Caco-2 (cell line): ENCODE measurements at regions of chr10 and their contacts with region 1.

Region 1: GRCh38 chr10:27241652-27242472 is 1.3 kb upstream of the ACBD5 start:
- DNase-seq: peak; percentile 95 to 97
- H3K4me3 ChIP-seq: peak overlapping the region; percentile 86
- H3K4me3 Mint-ChIP-seq: peak overlapping the region; percentile 84
- H3K27ac Mint-ChIP-seq: peak overlapping the region; percentile 77
- H3K4me1 ChIP-seq: peaks cover 10% of the 10 kb centered on the region; the same call in 1 of the 2 replicates
- H3K4me1 Mint-ChIP-seq: peaks cover 5% of the 10 kb centered on the region
- H3K27me3 ChIP-seq: no peaks in the 10 kb centered on the region
- H3K27me3 Mint-ChIP-seq: no peaks in the 10 kb centered on the region
- CTCF ChIP-seq: peak; percentile 38 to 43

Region 2: DNA sequence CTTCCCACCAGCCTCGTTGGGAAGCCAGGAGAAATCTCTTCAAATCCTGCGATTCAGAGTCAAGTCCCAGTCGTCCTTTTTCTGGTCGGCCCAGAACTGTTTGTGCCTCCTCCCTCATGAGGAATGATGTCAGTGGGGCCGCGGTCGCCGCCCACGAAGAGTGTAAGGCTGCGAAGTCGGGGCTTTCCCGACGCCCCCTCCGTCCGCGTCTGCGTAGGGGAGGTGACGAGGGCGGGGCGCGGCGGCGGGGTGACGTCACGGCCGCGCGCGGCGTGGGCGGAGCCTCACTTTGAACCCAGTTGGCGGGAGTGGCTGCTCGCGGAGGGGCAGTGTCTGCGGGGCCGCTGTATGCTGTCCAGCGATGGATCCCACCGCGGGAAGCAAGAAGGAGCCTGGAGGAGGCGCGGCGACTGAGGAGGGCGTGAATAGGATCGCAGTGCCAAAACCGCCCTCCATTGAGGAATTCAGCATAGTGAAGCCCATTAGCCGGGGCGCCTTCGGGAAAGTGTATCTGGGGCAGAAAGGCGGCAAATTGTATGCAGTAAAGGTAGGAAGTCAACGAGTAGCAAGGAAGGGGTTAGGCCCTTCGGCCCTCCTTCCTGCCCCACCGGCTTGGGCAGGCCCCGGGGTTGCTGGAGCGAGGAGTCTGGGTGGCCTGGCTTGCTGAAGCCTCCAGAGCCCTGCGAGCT is 86.7 kb before region 1 on chr10 and contains the start of gene MASTL:
- CTCF ChIA-PET with region 1: no interaction called
- POLR2A ChIA-PET with region 1: interaction called, 6 read pairs
- intact Hi-C with region 1: loop called (anchors 1 kb)
- DNase-seq: peak; percentile 95 to 96
- H3K4me3 ChIP-seq: peak within 1 kb of the TSS; percentile 52
- H3K4me3 Mint-ChIP-seq: peak within 1 kb of the TSS; percentile 99
- H3K27ac Mint-ChIP-seq: peak within 1 kb of the TSS; percentile 100
- H3K4me1 ChIP-seq: peaks cover 14% of the 10 kb centered on the region; the same call in 1 of the 2 replicates
- H3K4me1 Mint-ChIP-seq: peaks cover 31% of the 10 kb centered on the region
- H3K27me3 ChIP-seq: no peaks in the 10 kb centered on the region
- H3K27me3 Mint-ChIP-seq: no peaks in the 10 kb centered on the region
- CTCF ChIP-seq: no peak
- total RNA-seq, gene MASTL: 40.2 and 40.5 TPM in 2 replicates

Region 3: GRCh38 chr10:27188259-27188658 is 53.6 kb before region 1 on chr10:
- CTCF ChIA-PET with region 1: no interaction called
- POLR2A ChIA-PET with region 1: no interaction called
- intact Hi-C with region 1: no loop called
- DNase-seq: no peak
- H3K4me3 ChIP-seq: no peak overlapping the region
- H3K4me3 Mint-ChIP-seq: no peak overlapping the region
- H3K27ac Mint-ChIP-seq: no peak overlapping the region
- H3K4me1 ChIP-seq: no peaks in the 10 kb centered on the region
- H3K4me1 Mint-ChIP-seq: no peaks in the 10 kb centered on the region
- H3K27me3 ChIP-seq: no peaks in the 10 kb centered on the region
- H3K27me3 Mint-ChIP-seq: no peaks in the 10 kb centered on the region
- CTCF ChIP-seq: no peak

Region 4: DNA sequence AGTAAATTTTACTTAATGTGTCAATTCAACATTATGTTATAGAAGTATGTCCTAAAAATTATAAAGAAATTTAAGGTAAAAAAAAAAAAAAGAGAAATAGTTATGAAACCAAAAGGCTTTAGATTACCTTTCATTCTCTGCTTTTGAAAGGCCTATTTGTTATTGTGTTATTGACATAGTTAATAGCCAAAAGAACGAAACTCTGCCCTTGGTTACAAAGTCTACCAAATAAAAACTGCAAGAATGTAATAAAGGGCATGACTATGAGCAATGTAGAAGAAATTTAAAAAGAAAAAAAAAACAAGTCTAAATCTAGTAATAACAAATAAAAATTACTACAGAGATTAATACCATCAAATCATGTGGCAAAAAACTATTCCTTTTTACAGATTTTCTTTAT is 11.8 kb before region 1 on chr10:
- CTCF ChIA-PET with region 1: interaction called, 4 read pairs
- POLR2A ChIA-PET with region 1: no interaction called
- intact Hi-C with region 1: loop called (anchors 1 kb)
- DNase-seq: no peak
- H3K4me3 ChIP-seq: no peak overlapping the region
- H3K4me3 Mint-ChIP-seq: no peak overlapping the region
- H3K27ac Mint-ChIP-seq: no peak overlapping the region
- H3K4me1 ChIP-seq: peaks cover 15% of the 10 kb centered on the region
- H3K4me1 Mint-ChIP-seq: peaks cover 6% of the 10 kb centered on the region
- H3K27me3 ChIP-seq: no peaks in the 10 kb centered on the region
- H3K27me3 Mint-ChIP-seq: no peaks in the 10 kb centered on the region
- CTCF ChIP-seq: no peak

Region 5: DNA sequence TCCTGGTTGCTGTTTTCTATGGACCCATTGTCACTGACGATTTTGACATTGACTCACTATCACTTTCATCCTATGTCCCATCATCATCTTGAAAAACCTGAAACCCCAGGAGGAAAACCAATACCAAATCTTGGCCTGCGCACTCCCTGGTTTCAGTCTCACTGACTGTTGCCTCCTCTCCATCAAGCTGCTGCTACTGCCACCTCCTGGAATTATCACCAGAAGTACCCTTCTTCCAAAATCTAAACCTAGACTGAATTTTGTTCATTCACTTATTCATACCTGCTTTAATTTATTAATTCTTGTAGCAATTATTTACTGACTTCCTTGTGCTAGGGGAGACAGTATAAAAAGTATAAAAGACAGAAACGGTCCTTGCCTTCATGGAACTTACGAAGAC is 43.2 kb after region 1 on chr10:
- CTCF ChIA-PET with region 1: interaction called, 5 read pairs
- POLR2A ChIA-PET with region 1: no interaction called
- intact Hi-C with region 1: loop called (anchors 1 kb)
- DNase-seq: peak; percentile 48 to 62
- H3K4me3 ChIP-seq: no peak overlapping the region
- H3K4me3 Mint-ChIP-seq: no peak overlapping the region
- H3K27ac Mint-ChIP-seq: peak overlapping the region; percentile 16
- H3K4me1 ChIP-seq: no peaks in the 10 kb centered on the region
- H3K4me1 Mint-ChIP-seq: peaks cover 7% of the 10 kb centered on the region
- H3K27me3 ChIP-seq: no peaks in the 10 kb centered on the region
- H3K27me3 Mint-ChIP-seq: no peaks in the 10 kb centered on the region
- CTCF ChIP-seq: peak; percentile 33 to 67

Region 6: DNA sequence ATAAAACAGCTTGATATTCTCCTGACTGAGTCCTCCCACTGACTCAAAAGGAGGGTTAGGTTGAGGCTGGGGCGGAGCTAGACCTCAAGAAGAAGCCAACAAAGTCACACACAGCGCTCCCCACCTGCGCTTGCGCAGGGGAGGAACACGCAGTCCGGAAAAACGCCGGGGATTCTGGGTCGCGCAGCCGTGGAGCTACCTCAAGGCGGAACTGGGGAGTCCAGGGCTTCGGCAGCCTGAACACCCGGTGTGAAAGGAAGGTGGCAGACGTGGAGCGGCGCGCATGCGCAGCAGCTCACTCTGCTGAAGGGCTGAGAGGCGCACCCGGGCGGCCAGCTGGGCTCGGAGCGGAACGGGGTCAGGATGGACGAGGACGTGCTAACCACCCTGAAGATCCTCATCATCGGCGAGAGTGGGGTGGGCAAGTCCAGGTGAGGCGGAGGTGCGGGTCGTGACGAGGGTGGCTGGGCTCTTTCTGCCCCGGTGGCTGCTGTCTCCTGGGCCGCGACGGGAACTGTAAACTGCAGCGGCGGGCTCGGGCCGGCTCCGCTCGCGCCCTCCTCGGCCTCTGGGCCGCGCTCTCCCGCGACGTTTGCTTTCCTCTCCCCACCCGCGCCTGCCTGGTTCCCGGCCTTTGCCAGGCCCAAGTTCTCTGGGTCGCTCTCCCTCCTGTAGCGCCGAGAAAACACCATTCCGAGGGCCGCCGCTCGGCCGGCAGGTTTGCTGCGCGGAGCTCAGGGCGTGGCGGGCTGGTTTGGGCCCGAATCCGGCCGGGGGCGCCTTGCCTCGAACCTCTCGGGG is 262.3 kb after region 1 on chr10 and contains the start of gene RAB18:
- CTCF ChIA-PET with region 1: no interaction called
- POLR2A ChIA-PET with region 1: interaction called, 7 read pairs
- intact Hi-C with region 1: loop called (anchors 10 kb)
- DNase-seq: peak; percentile 99 to 100
- H3K4me3 ChIP-seq: peak within 1 kb of the TSS; percentile 94
- H3K4me3 Mint-ChIP-seq: peak within 1 kb of the TSS; percentile 95
- H3K27ac Mint-ChIP-seq: peak within 1 kb of the TSS; percentile 95
- H3K4me1 ChIP-seq: peaks cover 13% of the 10 kb centered on the region; the same call in 1 of the 2 replicates
- H3K4me1 Mint-ChIP-seq: peaks cover 14% of the 10 kb centered on the region
- H3K27me3 ChIP-seq: no peaks in the 10 kb centered on the region
- H3K27me3 Mint-ChIP-seq: no peaks in the 10 kb centered on the region
- CTCF ChIP-seq: peak in 1 of 2 experiments; percentile 2
- total RNA-seq, gene RAB18: 154 and 164 TPM in 2 replicates